ENCODE measurements at regions of chr3 and their contacts with region 1.

Region 1: DNA sequence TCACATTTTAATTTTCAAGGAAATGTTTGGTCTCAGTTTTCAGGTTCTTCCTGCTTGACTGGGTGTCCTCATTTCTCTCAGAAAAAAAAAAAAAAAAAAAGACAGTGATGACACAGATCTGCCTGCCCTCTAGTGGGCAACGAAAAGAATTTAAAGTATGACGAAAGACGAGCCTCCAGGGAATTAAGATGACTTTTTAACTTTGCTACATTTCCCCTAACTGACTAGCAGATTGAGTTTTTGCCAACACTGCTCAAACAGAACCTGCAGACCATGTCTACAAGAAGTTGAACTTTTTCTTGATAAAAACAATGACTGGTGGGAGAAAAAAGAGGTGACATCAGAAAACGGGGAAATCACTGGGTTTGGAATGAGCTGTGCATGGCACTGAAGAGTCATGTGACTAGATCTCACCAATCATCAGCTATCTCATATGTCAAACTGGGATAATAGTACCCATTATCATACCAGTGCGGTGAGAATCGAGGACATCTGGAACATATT is 40.8 kb downstream of the EOMES start:
- DNase-seq: peak; percentile 72
- H3K4me3 ChIP-seq: peak overlapping the region in 2 of 3 experiments; percentile 15 to 24
- H3K27ac ChIP-seq: peak overlapping the region; percentile 27
- H3K4me1 ChIP-seq: peaks cover 21% of the 10 kb centered on the region
- H3K27me3 ChIP-seq: no peaks in the 10 kb centered on the region
- CTCF ChIP-seq: peak; percentile 64 to 67

Region 2: GRCh38 chr3:27312044-27312668 is 369.1 kb before region 1 on chr3:
- CTCF ChIA-PET with region 1: no interaction called
- dilution Hi-C with region 1: no loop called
- in situ Hi-C with region 1: loop called in 1 of 2 experiments (anchors 25 kb)
- intact Hi-C with region 1: loop called (anchors 1 kb)
- DNase-seq: peak; percentile 65
- H3K4me3 ChIP-seq: no peak overlapping the region
- H3K27ac ChIP-seq: no peak overlapping the region
- H3K4me1 ChIP-seq: peaks cover 16% of the 10 kb centered on the region
- H3K27me3 ChIP-seq: no peaks in the 10 kb centered on the region
- CTCF ChIP-seq: peak; percentile 68 to 72

Region 3: GRCh38 chr3:27431116-27431515 is 250.2 kb before region 1 on chr3:
- CTCF ChIA-PET with region 1: no interaction called
- dilution Hi-C with region 1: no loop called
- in situ Hi-C with region 1: no loop called
- intact Hi-C with region 1: loop called (anchors 1 kb)
- DNase-seq: peak; percentile 77
- H3K4me3 ChIP-seq: no peak overlapping the region
- H3K27ac ChIP-seq: no peak overlapping the region
- H3K4me1 ChIP-seq: peaks cover 7% of the 10 kb centered on the region
- H3K27me3 ChIP-seq: no peaks in the 10 kb centered on the region
- CTCF ChIP-seq: no peak

Region 4: DNA sequence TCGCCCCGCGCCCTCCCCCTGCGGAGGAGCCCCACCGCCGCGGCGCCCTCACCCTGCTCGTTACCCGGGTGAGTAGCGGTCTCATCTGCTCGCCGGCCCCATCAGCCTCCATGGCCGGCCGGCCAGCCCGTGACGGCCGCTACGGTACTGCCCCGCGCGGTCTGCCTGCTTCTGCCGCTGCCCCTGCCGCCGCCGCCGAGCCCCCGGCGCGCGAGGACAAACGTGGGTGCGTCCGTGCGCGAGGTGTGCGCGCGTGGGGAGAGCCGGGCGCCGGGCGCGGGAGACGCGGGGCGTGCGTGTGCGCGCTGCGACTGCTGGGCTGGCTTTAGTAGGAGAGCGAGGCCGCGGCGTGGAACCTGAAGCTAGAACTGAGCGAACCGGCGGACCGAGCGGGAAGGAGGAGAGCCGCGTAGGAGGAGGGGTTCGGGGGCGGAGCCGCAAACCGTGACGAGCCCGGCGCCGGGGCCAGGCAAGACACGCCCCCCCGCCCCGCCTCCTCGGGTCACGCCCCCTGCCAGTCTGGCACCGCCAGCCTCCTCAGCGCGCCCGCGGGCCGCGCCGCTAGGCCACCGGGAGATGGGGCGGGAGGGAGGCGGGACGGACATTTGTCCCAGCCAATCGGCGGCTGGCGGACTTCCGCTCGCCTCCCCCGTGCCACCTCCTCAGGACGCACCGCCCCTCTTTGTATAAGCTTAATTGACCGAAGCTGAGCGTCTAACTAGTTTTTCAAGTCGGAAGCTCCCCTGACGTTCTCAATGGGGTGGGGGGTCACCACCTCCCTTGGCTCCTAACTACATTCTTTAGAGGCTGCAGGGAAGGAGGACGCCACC is 197.1 kb before region 1 on chr3 and contains the start of gene SLC4A7:
- CTCF ChIA-PET with region 1: no interaction called
- dilution Hi-C with region 1: no loop called
- in situ Hi-C with region 1: no loop called
- intact Hi-C with region 1: loop called (anchors 2 kb)
- DNase-seq: peak; percentile 96
- H3K4me3 ChIP-seq: peak within 1 kb of the TSS; percentile 71 to 93 (median 92)
- H3K27ac ChIP-seq: peak within 1 kb of the TSS; percentile 67
- H3K4me1 ChIP-seq: peaks cover 13% of the 10 kb centered on the region
- H3K27me3 ChIP-seq: no peaks in the 10 kb centered on the region
- CTCF ChIP-seq: no peak
- total RNA-seq, gene SLC4A7: 95.4 to 123 TPM

Region 5: DNA sequence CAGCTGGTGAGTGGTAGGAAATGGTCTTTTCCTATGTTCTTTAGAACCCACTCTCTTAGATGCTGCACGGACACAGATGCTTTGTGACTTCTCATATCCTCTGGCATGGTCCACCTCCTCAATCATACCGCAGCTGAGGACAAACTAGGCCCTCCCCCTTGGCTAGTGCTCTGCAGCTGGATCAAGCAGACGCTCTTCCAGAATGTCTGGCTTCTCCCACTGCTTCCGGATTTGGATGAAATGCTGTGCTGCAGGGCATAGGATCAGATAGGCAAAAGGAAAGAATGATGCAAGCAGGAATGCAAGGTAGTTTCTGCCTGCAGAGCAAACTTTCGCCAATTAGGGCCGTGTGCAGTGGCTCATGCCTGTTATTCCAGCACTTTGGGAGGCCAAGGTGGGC is 121.5 kb before region 1 on chr3:
- CTCF ChIA-PET with region 1: no interaction called
- dilution Hi-C with region 1: no loop called
- in situ Hi-C with region 1: no loop called
- intact Hi-C with region 1: no loop called
- DNase-seq: peak; percentile 37
- H3K4me3 ChIP-seq: no peak overlapping the region
- H3K27ac ChIP-seq: no peak overlapping the region
- H3K4me1 ChIP-seq: peaks cover 10% of the 10 kb centered on the region
- H3K27me3 ChIP-seq: no peaks in the 10 kb centered on the region
- CTCF ChIP-seq: no peak

Region 6: DNA sequence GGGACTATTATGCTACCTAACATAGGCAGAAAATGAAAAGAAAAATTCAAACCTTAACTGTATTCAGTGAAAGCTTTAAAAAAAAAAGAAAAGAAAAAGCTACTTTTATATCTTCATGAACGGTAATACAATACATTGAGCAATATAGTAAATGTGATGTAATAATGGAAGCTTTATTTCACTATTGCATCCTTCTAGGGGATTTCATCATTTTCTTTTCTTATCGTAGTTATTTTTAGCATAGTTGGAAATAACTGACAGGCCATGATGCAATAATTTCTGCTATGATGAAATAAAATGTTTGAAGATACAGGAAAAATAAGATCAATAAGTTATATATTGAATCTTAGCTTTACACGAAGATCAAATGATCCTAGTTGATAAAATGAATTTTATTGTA is 626.9 kb after region 1 on chr3:
- CTCF ChIA-PET with region 1: interaction called, 16 read pairs
- dilution Hi-C with region 1: no loop called
- in situ Hi-C with region 1: no loop called
- intact Hi-C with region 1: no loop called
- DNase-seq: no peak
- H3K4me3 ChIP-seq: no peak overlapping the region
- H3K27ac ChIP-seq: no peak overlapping the region
- H3K4me1 ChIP-seq: no peaks in the 10 kb centered on the region
- H3K27me3 ChIP-seq: no peaks in the 10 kb centered on the region
- CTCF ChIP-seq: no peak

Measured in mammary epithelial cell (primary cell).